B cell (primary cell): ENCODE measurements at regions of chr13 and their contacts with region 1.

Region 1: DNA sequence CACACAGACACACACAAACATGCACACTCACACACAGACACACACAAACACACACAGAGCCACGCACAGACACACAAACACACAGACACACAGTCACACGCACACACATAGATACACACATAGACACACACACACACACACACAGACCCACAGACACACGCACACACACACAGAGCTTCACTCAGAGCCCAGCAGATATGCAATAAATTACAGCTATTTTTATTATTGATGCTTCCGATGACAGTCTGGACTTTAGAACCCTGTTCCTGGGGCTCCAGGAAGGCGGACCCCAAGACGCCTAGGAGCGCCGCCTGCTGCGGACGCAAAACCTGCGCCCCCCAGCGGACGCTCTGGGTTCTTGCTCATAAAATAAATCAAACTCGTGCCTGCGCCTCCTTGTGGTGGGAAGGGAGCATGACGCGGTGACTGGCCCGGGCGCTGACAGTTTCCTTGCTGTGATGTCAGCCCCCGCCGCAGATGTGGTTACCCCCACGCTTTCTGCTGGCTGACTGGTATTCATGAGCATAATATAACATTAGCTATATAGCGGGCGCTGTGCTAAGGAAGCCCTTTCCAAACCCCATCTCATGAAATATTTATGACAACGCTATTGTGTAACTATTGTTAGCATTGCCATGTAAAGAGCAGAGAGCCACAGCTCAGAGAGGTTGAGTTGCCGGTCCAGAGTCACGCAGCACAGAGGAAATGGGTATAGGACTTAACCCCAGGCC is 64.4 kb upstream of the TM9SF2 start:
- DNase-seq: peak; percentile 96
- ATAC-seq: peak; percentile 69
- H3K4me3 ChIP-seq: peak overlapping the region in 2 of 5 experiments; percentile 6 to 27
- H3K4me3 Mint-ChIP-seq: peak overlapping the region; percentile 76
- H3K27ac ChIP-seq: no peak overlapping the region
- H3K27ac Mint-ChIP-seq: peak overlapping the region; percentile 81
- H3K4me1 ChIP-seq: peaks cover 49 to 70% of the 10 kb centered on the region in 2 donors
- H3K4me1 Mint-ChIP-seq: peaks cover 64% of the 10 kb centered on the region
- H3K27me3 ChIP-seq: no peaks in the 10 kb centered on the region
- H3K27me3 Mint-ChIP-seq: no peaks in the 10 kb centered on the region
- CTCF ChIP-seq: peak; percentile 100

Region 2: DNA sequence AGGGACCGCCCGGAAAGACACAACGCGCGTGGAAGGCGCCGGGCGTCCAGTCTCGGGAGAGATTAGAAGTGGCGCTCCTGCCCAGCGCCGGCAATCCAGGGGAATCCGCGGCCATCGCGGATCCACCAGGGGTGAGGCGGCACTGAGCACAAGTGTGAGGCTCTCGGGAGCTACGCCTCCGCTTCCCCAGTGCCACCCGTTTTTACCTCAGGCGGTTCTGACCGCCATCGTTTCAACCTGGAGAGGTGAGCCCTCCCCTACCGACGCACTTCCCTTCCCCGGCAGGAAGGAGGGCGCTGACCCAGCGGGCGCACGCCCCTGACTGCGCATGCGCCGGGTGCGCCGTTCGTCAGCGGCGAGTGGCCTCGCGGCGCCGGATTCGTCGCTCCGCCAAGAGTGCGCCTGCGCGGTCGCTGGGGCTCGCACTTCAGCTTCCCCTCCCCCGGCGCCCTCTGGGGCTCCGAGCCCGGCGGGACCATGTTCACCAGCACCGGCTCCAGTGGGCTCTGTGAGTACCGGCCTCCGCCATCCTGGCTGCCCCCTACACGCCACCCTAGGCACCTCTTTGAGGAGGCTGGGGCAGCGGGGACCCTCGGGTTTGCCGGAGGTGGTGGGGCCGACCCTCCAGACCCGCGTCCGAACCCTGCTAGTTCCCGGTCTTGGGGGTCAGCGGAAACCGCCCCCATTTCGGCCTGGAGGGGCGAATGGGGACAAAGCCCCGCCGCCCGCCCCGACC is 236.3 kb before region 1 on chr13 and contains the start of gene UBAC2:
- CTCF ChIA-PET with region 1: interaction called, 11 read pairs
- POLR2A ChIA-PET with region 1: interaction called, 3 read pairs
- intact Hi-C with region 1: loop called (anchors 1 kb)
- DNase-seq: peak; percentile 98
- ATAC-seq: peak; percentile 73
- H3K4me3 ChIP-seq: peak within 1 kb of the TSS; percentile 71 to 97 (median 92)
- H3K4me3 Mint-ChIP-seq: peak within 1 kb of the TSS; percentile 97
- H3K27ac ChIP-seq: peak within 1 kb of the TSS; percentile 97
- H3K27ac Mint-ChIP-seq: peak within 1 kb of the TSS; percentile 94
- H3K4me1 ChIP-seq: peaks cover 38 to 46% of the 10 kb centered on the region in 2 donors
- H3K4me1 Mint-ChIP-seq: peaks cover 54% of the 10 kb centered on the region
- H3K27me3 ChIP-seq: no peaks in the 10 kb centered on the region
- H3K27me3 Mint-ChIP-seq: no peaks in the 10 kb centered on the region
- CTCF ChIP-seq: no peak
- total RNA-seq, gene UBAC2: 52.9 and 56.3 TPM in 2 replicates

Region 3: GRCh38 chr13:99296398-99296797 is 140.5 kb before region 1 on chr13:
- CTCF ChIA-PET with region 1: interaction called, 96 read pairs
- POLR2A ChIA-PET with region 1: no interaction called
- intact Hi-C with region 1: loop called (anchors 10 kb)
- DNase-seq: peak; percentile 45
- ATAC-seq: no peak
- H3K4me3 ChIP-seq: peak overlapping the region in 3 of 5 experiments; percentile 2 to 47 (median 17)
- H3K4me3 Mint-ChIP-seq: peak overlapping the region; percentile 72
- H3K27ac ChIP-seq: peak overlapping the region; percentile 32 to 78
- H3K27ac Mint-ChIP-seq: peak overlapping the region; percentile 59
- H3K4me1 ChIP-seq: peaks cover 73 to 81% of the 10 kb centered on the region in 2 donors
- H3K4me1 Mint-ChIP-seq: peaks cover 82% of the 10 kb centered on the region
- H3K27me3 ChIP-seq: no peaks in the 10 kb centered on the region
- H3K27me3 Mint-ChIP-seq: no peaks in the 10 kb centered on the region
- CTCF ChIP-seq: no peak

Region 4: GRCh38 chr13:99356158-99357091 is 80.4 kb before region 1 on chr13:
- CTCF ChIA-PET with region 1: interaction called, 24 read pairs
- POLR2A ChIA-PET with region 1: interaction called, 4 read pairs
- intact Hi-C with region 1: no loop called
- DNase-seq: peak; percentile 91
- ATAC-seq: peak; percentile 60
- H3K4me3 ChIP-seq: peak overlapping the region in 4 of 5 experiments; percentile 13 to 47 (median 28)
- H3K4me3 Mint-ChIP-seq: peak overlapping the region; percentile 78
- H3K27ac ChIP-seq: peak overlapping the region; percentile 95 to 97
- H3K27ac Mint-ChIP-seq: peak overlapping the region; percentile 98
- H3K4me1 ChIP-seq: peaks cover 73 to 92% of the 10 kb centered on the region in 2 donors
- H3K4me1 Mint-ChIP-seq: peaks cover 96% of the 10 kb centered on the region
- H3K27me3 ChIP-seq: no peaks in the 10 kb centered on the region
- H3K27me3 Mint-ChIP-seq: no peaks in the 10 kb centered on the region
- CTCF ChIP-seq: no peak

Region 5: GRCh38 chr13:99417201-99418102 is 19.4 kb before region 1 on chr13:
- CTCF ChIA-PET with region 1: interaction called, 93 read pairs
- POLR2A ChIA-PET with region 1: interaction called, 12 read pairs
- intact Hi-C with region 1: loop called (anchors 1 kb)
- DNase-seq: no peak
- ATAC-seq: no peak
- H3K4me3 ChIP-seq: no peak overlapping the region
- H3K4me3 Mint-ChIP-seq: no peak overlapping the region
- H3K27ac ChIP-seq: no peak overlapping the region
- H3K27ac Mint-ChIP-seq: peak overlapping the region; percentile 67
- H3K4me1 ChIP-seq: peaks cover 51 to 58% of the 10 kb centered on the region in 2 donors
- H3K4me1 Mint-ChIP-seq: peaks cover 48% of the 10 kb centered on the region
- H3K27me3 ChIP-seq: peaks cover 0 to 3% (median 0%) of the 10 kb centered on the region in 4 experiments
- H3K27me3 Mint-ChIP-seq: no peaks in the 10 kb centered on the region
- CTCF ChIP-seq: no peak

Region 6: GRCh38 chr13:99606324-99607066 is 169.6 kb after region 1 on chr13:
- CTCF ChIA-PET with region 1: interaction called, 4 read pairs
- POLR2A ChIA-PET with region 1: no interaction called
- intact Hi-C with region 1: loop called (anchors 2 kb)
- DNase-seq: peak; percentile 93
- ATAC-seq: peak; percentile 90
- H3K4me3 ChIP-seq: peak within 1 kb of the TSS; percentile 70 to 98 (median 86)
- H3K4me3 Mint-ChIP-seq: peak within 1 kb of the TSS; percentile 98
- H3K27ac ChIP-seq: peak within 1 kb of the TSS; percentile 68 to 74
- H3K27ac Mint-ChIP-seq: peak within 1 kb of the TSS; percentile 90
- H3K4me1 ChIP-seq: peaks cover 8 to 21% of the 10 kb centered on the region in 2 donors
- H3K4me1 Mint-ChIP-seq: peaks cover 37% of the 10 kb centered on the region
- H3K27me3 ChIP-seq: no peaks in the 10 kb centered on the region
- H3K27me3 Mint-ChIP-seq: no peaks in the 10 kb centered on the region
- CTCF ChIP-seq: no peak